Dendritic cell treated with granulocyte-macrophage colony-stimulating factor and Interleukin-4, amounts not matched to agents 40 ng/mL and 50 ng/mL, for 4 days (primary cell): ENCODE measurements at regions of chr7 and their contacts with region 1.

Region 1: GRCh38 chr7:151631968-151632749 is 112.5 kb upstream of the RHEB start:
- H3K4me3 Mint-ChIP-seq: peak overlapping the region; percentile 97
- H3K27ac Mint-ChIP-seq: peak overlapping the region; percentile 99
- H3K4me1 Mint-ChIP-seq: peaks cover 22% of the 10 kb centered on the region
- H3K27me3 Mint-ChIP-seq: no peaks in the 10 kb centered on the region

Region 2: GRCh38 chr7:151744656-151745638 is 112.8 kb after region 1 on chr7:
- intact Hi-C with region 1: loop called (anchors 10 kb)
- H3K4me3 Mint-ChIP-seq: no peak overlapping the region
- H3K27ac Mint-ChIP-seq: peak overlapping the region; percentile 43
- H3K4me1 Mint-ChIP-seq: peaks cover 72% of the 10 kb centered on the region
- H3K27me3 Mint-ChIP-seq: no peaks in the 10 kb centered on the region

Region 3: GRCh38 chr7:152145853-152146466 is 513.8 kb after region 1 on chr7:
- intact Hi-C with region 1: no loop called
- H3K4me3 Mint-ChIP-seq: no peak overlapping the region
- H3K27ac Mint-ChIP-seq: no peak overlapping the region
- H3K4me1 Mint-ChIP-seq: no peaks in the 10 kb centered on the region
- H3K27me3 Mint-ChIP-seq: no peaks in the 10 kb centered on the region